GM18951 (cell line): ENCODE measurements at regions of chr1 and their contacts with region 1.

Region 1: GRCh38 chr1:23559136-23559984 is at the start of gene ID3:
- POLR2A ChIP-seq: peak; percentile 98

Region 2: DNA sequence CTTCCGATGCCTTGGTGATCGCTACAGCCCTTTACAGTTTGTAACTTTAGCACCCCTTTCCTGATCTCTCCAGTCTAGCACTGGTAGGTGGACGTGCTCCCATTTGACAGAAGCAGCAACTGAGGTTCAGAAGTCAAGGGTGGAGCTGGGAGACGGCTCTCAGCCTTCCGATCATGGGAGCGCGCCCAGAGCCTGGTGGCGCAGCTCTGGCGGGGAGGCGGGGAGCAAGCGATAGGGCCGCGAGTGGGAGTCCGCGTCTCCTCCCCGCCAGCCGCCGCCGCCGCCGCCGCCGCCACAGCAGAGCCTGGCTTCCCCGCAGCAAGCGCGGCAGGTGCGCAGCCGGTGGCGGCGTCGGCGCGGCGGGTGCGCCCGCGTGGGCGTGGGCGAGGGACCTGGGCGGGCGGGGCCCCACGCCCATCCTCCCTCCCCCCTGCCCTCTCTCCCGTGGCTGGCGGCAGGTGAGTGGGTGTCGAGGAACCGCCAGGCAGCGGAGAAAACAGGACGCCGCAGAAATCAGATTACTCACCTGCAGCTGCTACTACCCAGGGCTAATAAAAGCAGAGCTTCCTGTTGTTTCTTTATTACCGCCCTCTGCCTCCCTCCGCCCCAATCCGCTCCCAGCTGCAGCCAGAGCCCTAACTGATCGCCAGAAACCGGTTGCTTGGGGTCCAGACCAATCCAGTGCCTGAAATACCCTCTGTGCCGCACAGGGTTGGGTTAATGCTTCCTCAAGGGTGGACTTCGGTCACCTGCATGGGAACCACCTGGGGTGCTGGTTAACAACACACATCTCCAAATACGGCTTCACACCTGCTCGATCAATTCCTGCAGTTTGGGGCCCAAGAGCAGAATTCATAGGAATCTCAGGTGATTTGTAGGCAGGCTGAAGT is 60.2 kb after region 1 on chr1:
- in situ Hi-C with region 1: loop called (anchors 10 kb)
- POLR2A ChIP-seq: no peak

Region 3: DNA sequence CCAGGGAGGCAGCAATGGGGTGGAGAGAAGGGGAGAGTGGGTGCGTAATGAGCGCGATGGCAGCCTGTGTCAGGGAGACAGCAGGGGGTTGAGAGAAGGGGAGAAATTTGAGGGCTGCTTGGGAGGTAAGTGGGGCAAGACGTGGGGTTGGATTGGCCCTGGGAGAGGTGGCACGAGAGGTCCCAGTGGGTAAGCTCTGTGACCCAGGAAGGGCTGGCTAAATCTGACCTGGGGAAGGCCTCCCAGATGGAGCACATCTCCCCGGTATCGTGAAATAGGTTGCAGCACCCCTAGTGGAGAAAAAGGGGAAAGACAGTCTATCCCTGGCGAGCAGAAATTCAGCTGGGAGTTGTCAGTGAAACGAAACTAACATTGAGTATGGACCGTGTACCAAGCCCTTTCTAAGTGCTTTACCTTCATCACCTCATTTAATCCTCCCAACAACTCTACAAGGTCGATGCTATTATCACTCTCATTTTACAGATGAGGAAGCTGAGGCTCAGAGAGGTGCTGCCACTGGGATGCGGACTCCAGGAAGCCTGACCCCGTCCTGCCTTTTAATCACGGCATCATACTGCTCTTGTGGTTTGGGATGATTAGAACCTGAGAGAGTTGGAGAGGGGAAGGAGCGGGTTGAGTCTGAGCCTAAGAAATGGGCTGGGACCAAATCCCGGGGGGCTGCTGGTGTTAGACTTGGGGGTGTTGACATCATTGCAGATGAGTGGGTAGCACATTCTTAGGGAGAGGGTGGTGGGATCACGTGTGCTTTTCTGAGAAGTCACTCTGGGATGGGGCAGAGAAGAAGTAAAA is 75.7 kb after region 1 on chr1:
- in situ Hi-C with region 1: loop called (anchors 5 kb)
- POLR2A ChIP-seq: no peak